OCI-LY7 (cell line): ENCODE measurements at regions of chr19 and their contacts with region 1.

Region 1: DNA sequence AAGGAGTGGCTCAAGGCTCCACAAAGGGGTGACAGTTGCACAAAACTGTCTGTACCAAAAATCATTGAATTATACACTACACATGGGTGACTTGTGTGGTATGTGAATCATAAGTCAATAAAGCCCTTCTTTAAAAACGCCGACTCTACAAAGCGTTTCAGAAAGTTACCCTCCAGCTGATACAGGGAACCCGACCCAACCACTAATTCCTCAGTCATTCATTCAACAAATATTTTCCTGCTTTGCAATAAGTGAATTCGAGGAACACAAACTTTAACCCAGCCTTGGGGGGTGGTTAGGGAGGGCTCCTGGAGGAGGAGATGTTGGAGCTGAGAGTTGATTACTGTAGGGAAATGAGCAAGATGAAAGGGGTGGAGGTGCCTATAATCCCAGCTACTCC is 32.0 kb downstream of the LTBP4 start:
- DNase-seq: no peak
- H3K4me3 ChIP-seq: no peak overlapping the region
- H3K27ac ChIP-seq: no peak overlapping the region
- H3K4me1 ChIP-seq: no peaks in the 10 kb centered on the region
- CTCF ChIP-seq: no peak

Region 2: DNA sequence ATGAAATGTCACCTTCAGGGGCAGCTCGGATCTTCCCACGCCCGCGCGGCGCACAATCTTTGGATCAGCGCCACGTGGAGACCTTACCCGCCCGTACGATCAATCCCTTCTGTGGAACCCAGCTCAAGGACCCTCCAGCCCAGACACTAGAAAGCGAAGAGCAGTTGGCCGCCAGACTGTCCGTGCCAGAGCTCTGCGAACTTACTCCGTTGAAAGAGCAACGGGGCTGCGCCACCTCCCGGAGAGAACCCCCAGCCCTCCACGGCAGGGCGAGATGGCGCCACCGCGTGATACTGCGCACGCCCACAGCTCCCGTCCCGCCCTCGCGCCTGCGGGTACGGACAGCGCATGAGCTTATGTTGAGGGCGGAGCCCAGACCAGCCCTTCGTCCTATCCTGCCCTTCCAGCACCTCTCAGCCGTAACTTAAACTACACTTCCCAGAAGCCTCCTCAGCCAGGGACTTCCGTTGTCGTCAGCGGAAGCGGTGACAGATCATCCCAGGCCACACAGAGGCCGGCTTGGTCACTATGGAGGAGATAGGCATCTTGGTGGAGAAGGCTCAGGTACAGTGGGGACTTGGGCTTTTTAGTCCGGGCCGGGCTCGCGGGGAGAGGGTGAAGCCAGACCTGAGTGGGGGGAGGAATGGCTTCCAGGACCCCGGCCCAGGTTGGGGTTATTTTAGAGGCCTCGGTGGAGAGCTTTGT is 662.4 kb before region 1 on chr19 and contains the start of gene PSMC4:
- CTCF ChIA-PET with region 1: no interaction called
- POLR2A ChIA-PET with region 1: no interaction called
- intact Hi-C with region 1: no loop called
- DNase-seq: peak; percentile 99
- H3K4me3 ChIP-seq: peak within 1 kb of the TSS; percentile 86
- H3K27ac ChIP-seq: peak within 1 kb of the TSS; percentile 60
- H3K4me1 ChIP-seq: peaks cover 23% of the 10 kb centered on the region
- CTCF ChIP-seq: peak; percentile 93
- total RNA-seq, gene PSMC4: 82.3 and 94.3 TPM in 2 replicates

Region 3: DNA sequence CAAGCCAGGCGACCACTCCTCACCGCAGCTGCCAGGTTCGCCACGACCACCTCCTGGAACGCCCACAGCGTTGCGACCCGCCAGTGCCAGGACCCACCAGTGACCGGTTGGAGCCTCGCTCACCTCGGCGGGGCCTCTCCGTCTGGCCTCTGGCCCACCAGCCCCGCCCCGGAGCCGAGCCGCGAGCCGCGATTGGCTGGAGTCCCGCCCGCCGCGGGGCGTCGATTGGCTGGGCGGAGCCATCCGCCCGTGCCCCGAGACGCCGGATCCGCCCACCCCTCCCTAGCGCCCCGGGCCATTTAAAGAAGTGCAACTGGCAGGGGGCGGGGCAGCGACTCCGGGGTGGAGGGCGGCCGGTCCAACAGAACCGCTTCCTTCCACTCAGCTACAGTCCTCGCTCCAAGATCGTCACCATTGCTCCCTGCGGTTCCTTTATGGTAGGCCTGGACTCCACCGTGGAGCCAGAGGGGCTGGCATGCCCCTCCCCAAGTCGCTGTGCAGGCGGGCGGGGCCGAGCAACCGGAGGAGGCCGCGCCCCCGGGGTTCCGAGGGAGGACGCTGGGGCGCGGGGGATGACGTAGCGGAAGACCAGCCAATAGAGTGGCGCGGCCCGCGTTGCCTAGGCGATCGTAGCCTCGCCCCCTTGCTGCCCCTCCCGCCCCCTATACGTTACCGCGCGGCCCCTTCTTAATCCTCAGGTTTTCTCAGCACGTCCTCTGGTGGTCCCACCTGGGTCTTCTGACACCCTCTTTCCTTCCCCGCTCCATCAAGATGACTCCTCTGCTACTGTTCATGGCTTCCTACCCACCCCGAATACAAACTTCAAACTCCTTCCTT is 188.8 kb before region 1 on chr19 and contains the start of gene SERTAD3:
- CTCF ChIA-PET with region 1: no interaction called
- POLR2A ChIA-PET with region 1: no interaction called
- intact Hi-C with region 1: no loop called
- DNase-seq: peak; percentile 98
- H3K4me3 ChIP-seq: peak within 1 kb of the TSS; percentile 85
- H3K27ac ChIP-seq: peak within 1 kb of the TSS; percentile 88
- H3K4me1 ChIP-seq: peaks cover 21% of the 10 kb centered on the region
- CTCF ChIP-seq: peak; percentile 72
- total RNA-seq, gene SERTAD3: 12.2 and 15.7 TPM in 2 replicates

Region 4: GRCh38 chr19:40529093-40529954 is 103.9 kb before region 1 on chr19:
- CTCF ChIA-PET with region 1: no interaction called
- POLR2A ChIA-PET with region 1: no interaction called
- intact Hi-C with region 1: loop called (anchors 10 kb)
- DNase-seq: peak; percentile 92
- H3K4me3 ChIP-seq: peak overlapping the region; percentile 61
- H3K27ac ChIP-seq: no peak overlapping the region
- H3K4me1 ChIP-seq: peaks cover 19% of the 10 kb centered on the region
- CTCF ChIP-seq: peak; percentile 90

Region 5: GRCh38 chr19:40603389-40604135 is 29.6 kb before region 1 on chr19:
- CTCF ChIA-PET with region 1: interaction called, 5 read pairs
- POLR2A ChIA-PET with region 1: no interaction called
- intact Hi-C with region 1: loop called (anchors 1 kb)
- DNase-seq: peak; percentile 98
- H3K4me3 ChIP-seq: peak overlapping the region; percentile 66
- H3K27ac ChIP-seq: no peak overlapping the region
- H3K4me1 ChIP-seq: peaks cover 62% of the 10 kb centered on the region
- CTCF ChIP-seq: no peak

Region 6: GRCh38 chr19:40762754-40763470 is 129.7 kb after region 1 on chr19:
- CTCF ChIA-PET with region 1: no interaction called
- POLR2A ChIA-PET with region 1: no interaction called
- intact Hi-C with region 1: no loop called
- DNase-seq: no peak
- H3K4me3 ChIP-seq: no peak overlapping the region
- H3K27ac ChIP-seq: no peak overlapping the region
- H3K4me1 ChIP-seq: no peaks in the 10 kb centered on the region
- CTCF ChIP-seq: no peak